ENCODE measurements at regions of chr11 and their contacts with region 1.

Region 1: GRCh38 chr11:119030329-119031049 is at the start of gene SLC37A4:
- DNase-seq: peak; percentile 98
- H3K4me3 Mint-ChIP-seq: peak within 1 kb of the TSS; percentile 75
- H3K27ac Mint-ChIP-seq: peak within 1 kb of the TSS; percentile 65
- H3K4me1 Mint-ChIP-seq: peaks cover 15% of the 10 kb centered on the region
- H3K27me3 Mint-ChIP-seq: no peaks in the 10 kb centered on the region
- total RNA-seq, gene SLC37A4: 31.7 and 34.4 TPM in 2 replicates

Region 2: DNA sequence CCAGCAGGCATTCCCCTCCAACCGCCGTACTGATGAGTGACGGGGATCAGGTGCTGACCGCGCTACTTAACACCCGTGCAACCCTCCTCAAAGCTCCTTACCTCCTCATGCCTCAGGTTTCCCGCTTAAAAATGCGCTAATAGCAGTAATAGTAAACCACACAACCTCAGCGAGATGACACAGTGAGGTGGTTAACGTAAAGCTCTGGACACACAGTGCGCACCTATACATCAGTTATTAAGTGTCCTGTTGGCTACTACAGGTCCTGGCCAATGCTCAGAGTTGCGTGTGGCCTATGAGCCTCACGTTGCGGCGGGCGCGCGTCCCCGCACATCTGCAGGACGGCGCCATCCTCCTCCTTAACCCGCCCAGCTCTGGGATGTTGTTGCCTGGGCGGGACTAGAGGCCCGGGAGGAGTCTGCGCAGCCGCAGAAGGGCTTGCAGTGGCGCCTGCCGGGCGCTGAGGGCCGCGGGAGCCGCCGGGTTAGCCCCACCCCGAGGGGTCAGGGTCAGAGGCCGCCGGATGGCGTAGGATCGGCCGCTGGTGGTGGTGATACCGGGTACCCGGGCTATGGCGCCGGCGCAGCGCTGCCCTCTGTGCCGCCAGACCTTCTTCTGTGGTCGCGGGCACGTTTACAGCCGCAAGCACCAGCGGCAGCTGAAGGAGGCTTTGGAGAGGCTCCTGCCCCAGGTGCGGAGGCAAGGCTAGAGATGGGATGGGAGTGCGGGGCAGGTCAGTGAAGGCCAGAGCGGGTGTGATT is 32.7 kb before region 1 on chr11 and contains the start of gene CENATAC:
- intact Hi-C with region 1: loop called (anchors 5 kb)
- DNase-seq: peak; percentile 95
- H3K4me3 Mint-ChIP-seq: peak within 1 kb of the TSS; percentile 99
- H3K27ac Mint-ChIP-seq: peak within 1 kb of the TSS; percentile 98
- H3K4me1 Mint-ChIP-seq: peaks cover 21% of the 10 kb centered on the region
- H3K27me3 Mint-ChIP-seq: no peaks in the 10 kb centered on the region
- total RNA-seq, gene CENATAC: 44.2 and 47.7 TPM in 2 replicates

Region 3: DNA sequence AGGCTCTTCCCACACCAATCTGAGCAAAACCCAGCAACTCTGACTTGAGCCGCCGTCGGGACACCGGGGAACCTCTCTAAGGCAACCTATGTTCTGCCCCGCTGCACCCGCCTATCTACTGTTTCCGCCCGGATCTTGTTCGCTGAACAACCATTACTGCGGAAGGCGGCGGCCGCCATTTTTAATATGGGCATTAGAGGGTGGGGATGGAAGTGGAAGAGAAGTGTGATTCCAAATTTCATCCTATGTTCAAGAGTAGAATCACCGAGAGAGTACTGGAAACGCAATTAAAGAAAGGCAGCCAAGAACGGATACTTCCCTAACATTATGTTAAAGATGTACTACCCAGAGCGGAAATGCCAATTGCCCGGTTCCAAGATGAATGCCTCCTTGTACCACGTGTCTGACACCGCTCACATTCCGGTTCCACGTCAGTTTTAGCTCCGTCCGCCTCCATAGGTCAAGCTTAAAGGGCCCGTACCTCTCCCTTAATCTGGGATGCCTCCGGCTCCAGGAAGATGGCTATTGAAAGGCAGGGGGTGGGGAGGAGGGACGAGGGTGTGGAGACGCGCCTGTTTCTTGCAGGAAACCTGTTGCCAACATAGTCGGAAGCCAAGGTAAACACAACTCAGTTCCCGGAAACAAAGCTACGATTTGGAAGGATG is 71.4 kb after region 1 on chr11 and contains the start of gene DPAGT1:
- intact Hi-C with region 1: no loop called
- DNase-seq: peak; percentile 84
- H3K4me3 Mint-ChIP-seq: peak within 1 kb of the TSS; percentile 91
- H3K27ac Mint-ChIP-seq: peak within 1 kb of the TSS; percentile 98
- H3K4me1 Mint-ChIP-seq: peaks cover 32% of the 10 kb centered on the region
- H3K27me3 Mint-ChIP-seq: no peaks in the 10 kb centered on the region
- total RNA-seq, gene DPAGT1: 82.2 and 83.4 TPM in 2 replicates

Measured in activated T-helper 2 cell treated with anti-CD3 and anti-CD28 coated beads, Interferon-gamma antibody, Interleukin-2, Interleukin-4, amounts not matched to agents 10 μg/mL and 5 μg/mL and 100 μg/mL, durations not matched to agents 14 hours and 24 hours and 36 hours (primary cell).